ENCODE measurements at regions of chr7 and their contacts with region 1.

Region 1: GRCh38 chr7:70435634-70436033 is 696.3 kb upstream of the GALNT17 start:
- DNase-seq: no peak
- H3K4me3 Mint-ChIP-seq: no peak overlapping the region
- H3K27ac Mint-ChIP-seq: no peak overlapping the region
- H3K4me1 Mint-ChIP-seq: no peaks in the 10 kb centered on the region
- H3K27me3 Mint-ChIP-seq: no peaks in the 10 kb centered on the region

Region 2: DNA sequence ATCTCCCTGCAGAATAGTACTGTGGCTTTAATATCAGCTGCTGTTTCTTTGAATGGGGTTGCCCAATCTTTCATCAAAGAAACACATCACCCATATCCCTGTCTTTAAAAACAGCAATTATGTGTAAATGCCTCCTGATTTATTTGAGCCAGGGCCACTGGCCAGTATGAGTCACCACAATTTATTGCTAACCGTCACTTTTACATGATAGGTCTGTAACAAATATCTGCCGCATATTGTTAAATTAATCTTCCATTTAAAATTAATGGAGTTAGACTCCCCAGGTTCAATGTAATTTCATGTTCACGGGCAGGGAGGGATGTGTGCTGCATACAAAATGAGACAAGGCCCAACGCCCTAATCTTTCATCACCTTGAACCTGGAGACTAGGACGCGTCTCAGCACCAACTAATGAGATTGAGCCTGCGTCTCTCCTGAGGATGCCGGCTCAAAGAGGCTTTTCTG is 164.0 kb before region 1 on chr7:
- intact Hi-C with region 1: no loop called
- DNase-seq: no peak
- H3K4me3 Mint-ChIP-seq: no peak overlapping the region
- H3K27ac Mint-ChIP-seq: no peak overlapping the region
- H3K4me1 Mint-ChIP-seq: no peaks in the 10 kb centered on the region
- H3K27me3 Mint-ChIP-seq: no peaks in the 10 kb centered on the region

Region 3: GRCh38 chr7:70372768-70373515 is 62.7 kb before region 1 on chr7:
- intact Hi-C with region 1: loop called (anchors 2 kb)
- DNase-seq: no peak
- H3K4me3 Mint-ChIP-seq: no peak overlapping the region
- H3K27ac Mint-ChIP-seq: no peak overlapping the region
- H3K4me1 Mint-ChIP-seq: no peaks in the 10 kb centered on the region
- H3K27me3 Mint-ChIP-seq: no peaks in the 10 kb centered on the region

Measured in activated CD4-positive, alpha-beta T cell treated with anti-CD3 and anti-CD28 coated beads, Interleukin-2, amount 10 ng/mL, durations not matched to agents 24 days and 14 days (primary cell).